ENCODE measurements at regions of chr11 and their contacts with region 1.

Region 1: DNA sequence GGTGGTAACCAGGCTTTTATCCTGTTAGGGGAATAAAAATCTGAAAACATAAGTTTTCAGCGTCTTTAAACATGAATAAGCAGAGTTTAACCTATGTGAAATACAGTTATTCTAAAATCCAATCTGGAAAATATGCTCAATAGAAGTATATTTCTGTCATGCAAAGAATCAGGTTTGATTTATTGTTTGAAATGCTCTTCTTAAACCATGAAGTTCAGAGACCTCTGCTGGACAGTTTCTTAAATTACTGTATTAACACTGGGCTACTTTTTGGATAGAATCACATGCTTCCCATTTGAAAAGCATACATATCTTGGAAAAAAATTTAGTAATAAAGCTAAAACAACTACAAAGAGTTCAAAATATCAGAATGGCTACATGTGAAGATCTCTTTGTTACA is 25.4 kb downstream of the APIP start:
- DNase-seq: no peak

Region 2: GRCh38 chr11:34585735-34586487 is 304.9 kb before region 1 on chr11:
- intact Hi-C with region 1: loop called (anchors 10 kb)
- DNase-seq: no peak

Region 3: DNA sequence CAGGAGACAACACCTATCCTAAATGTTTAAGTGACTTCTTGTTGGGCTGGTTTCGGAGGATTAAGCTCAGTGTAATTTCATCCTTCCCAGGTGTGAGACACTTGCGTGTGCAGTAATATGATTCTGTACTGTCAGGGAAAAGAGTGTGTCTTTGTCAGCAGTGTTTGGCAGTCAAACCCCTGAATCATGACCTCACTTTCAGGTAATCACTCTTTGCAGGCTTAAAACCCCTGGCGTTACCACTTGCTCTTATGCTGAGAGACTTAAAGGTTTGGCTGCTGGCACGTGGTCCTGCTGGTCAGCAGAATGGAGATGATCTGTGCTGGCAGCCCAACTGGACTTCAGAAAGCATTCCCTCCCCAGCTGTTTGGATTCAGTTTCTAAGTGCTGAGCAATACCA is 30.8 kb before region 1 on chr11:
- intact Hi-C with region 1: no loop called
- DNase-seq: no peak

Measured in posterior vena cava (tissue), 2 donors.